A549 (cell line): ENCODE measurements at regions of chr12 and their contacts with region 1.

Region 1: GRCh38 chr12:6735448-6736191 is 11.8 kb downstream of the COPS7A start:
- DNase-seq: peak; percentile 68 to 77
- ATAC-seq: peak; percentile 99
- H3K4me3 ChIP-seq: no peak overlapping the region
- H3K27ac ChIP-seq: peak overlapping the region; percentile 67 to 72
- H3K4me1 ChIP-seq: peaks cover 6% of the 10 kb centered on the region
- CTCF ChIP-seq: peak; percentile 90
- EP300 ChIP-seq: no peak
- POLR2A ChIP-seq: no peak
- RAD21 ChIP-seq: peak; percentile 80 to 83

Region 2: DNA sequence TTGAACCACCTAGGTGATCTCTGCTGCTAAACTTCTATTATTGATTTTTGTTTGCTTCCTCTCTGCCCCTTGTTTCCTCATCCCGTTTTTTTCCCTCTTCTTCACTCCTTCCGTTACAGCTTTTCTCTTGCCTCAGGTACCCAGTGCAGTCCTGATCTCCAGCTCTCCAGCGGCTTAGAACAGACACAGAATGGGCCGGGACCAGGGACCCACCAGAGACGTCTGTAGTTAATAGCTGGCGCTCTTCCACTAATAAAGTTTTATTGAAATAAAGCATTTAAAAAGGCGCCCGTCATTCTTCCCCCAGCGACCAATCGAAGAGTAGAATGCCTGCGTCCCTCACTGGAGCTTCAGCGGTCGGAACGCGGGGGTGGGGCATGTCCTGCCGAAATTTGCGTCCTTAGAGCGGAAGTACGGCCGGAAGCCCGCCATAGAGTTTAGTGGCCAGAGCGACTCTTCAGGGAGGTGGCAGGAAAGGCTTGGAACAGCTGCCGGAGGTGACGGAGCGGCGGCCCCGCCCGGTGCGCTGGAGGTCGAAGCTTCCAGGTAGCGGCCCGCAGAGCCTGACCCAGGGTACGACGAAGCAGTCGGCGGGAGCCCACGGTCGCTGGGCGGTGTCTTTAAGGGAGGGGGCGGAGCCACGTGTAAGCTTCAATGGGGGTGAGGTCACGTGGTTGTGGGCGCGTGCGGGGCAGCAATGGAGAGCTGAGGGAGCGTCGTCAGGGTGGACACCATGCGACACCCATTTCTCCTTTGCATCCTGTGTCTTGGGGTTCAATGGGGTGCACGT is 11.8 kb before region 1 on chr12 and contains the start of gene COPS7A:
- CTCF ChIA-PET with region 1: interaction called, 12 read pairs
- POLR2A ChIA-PET with region 1: interaction called, 24 read pairs
- DNase-seq: peak; percentile 99
- ATAC-seq: peak; percentile 98
- H3K4me3 ChIP-seq: peak within 1 kb of the TSS; percentile 61
- H3K27ac ChIP-seq: peak within 1 kb of the TSS; percentile 86 to 89
- H3K4me1 ChIP-seq: peaks cover 13% of the 10 kb centered on the region
- CTCF ChIP-seq: no peak
- EP300 ChIP-seq: no peak
- POLR2A ChIP-seq: peak; percentile 92
- RAD21 ChIP-seq: no peak
- polyA plus RNA-seq, gene COPS7A: 78.8 and 95.0 TPM in 2 replicates

Region 3: DNA sequence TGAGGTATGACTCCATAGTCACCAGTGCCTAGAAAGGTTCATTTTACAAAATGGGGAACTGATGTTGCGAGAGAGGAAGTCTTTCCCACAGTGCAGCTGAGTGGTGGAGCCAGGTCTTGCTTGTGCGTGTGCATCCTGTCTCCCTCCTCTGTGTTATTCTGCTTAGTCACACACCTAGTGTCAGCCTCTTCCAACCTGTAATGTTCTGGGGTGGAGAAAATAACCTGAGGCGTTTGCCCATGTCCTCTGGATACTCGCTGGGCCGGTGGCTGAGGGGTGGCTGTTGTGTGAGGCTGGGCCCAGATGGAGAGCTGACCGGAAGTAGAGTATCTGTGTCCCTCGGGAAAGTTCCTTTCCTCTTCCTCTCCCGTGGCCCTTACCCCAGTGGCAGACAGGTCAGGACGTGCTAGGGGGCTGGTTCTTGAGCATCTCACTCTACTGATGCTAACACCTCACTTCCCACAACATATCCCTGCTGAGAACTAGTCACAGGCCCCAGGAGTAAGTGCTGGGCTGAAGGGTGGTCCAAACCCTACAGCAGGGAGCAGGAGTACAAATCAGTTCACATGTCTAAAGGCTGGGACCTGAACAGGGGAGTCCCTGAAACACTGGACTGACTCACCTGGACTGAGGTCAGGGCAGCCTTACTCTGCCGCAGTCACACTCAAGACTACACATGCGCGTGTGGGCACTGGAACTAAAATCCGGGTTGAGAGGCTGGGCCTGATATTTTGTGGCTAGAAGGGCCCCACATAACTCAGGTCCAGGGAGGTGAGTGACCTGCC is 10.3 kb after region 1 on chr12:
- CTCF ChIA-PET with region 1: interaction called, 17 read pairs
- POLR2A ChIA-PET with region 1: no interaction called
- DNase-seq: no peak
- ATAC-seq: peak; percentile 25 to 49; a peak in 3 of 6 replicates
- H3K4me3 ChIP-seq: no peak overlapping the region
- H3K27ac ChIP-seq: no peak overlapping the region
- H3K4me1 ChIP-seq: 0 out of 3 replicates have a peak, but pooled peaks cover 4% of the 10 kb centered on the region
- CTCF ChIP-seq: no peak
- EP300 ChIP-seq: no peak
- POLR2A ChIP-seq: no peak
- RAD21 ChIP-seq: no peak

Region 4: DNA sequence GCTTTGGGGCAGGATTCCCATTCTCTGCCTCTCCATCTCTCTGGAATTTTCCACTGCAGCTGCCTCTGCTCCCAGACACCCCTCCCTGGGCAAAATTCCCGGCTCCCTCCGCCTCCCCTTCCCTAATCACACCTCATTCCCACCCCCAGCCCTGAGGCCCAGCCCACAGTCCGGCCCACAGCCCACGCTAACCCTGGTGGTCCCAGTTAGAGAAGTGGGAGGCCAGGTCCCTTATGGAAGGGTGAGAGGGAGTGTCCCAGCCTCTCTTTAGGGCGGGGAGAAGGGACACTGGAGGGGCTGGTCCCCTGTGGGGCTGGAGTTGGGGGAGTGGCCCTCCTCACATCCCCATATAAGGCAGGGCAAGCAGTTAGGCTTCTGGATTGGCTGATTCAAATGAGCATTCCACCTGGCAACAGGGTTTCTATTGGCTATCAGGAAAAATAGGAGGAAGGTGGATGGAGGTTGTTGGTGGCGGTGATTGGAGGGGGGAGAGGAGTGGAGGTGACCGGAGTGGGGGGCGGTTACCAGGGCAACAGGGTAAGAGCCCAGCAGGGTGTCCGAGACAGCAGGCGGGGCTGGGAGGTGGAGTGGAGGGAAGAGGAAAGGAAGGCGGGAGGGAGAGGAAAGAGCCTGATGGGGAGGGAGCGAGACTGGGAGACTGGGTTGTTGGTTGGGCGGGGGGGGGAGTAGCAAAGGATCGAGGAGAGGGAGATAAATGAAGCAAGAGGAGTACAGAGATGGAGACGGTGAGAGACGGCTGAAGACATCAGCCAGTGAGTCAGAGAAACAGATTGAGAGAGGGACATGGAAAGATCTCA is 28.6 kb after region 1 on chr12:
- CTCF ChIA-PET with region 1: interaction called, 50 read pairs
- POLR2A ChIA-PET with region 1: interaction called, 3 read pairs
- DNase-seq: peak; percentile 100
- ATAC-seq: peak; percentile 69 to 87
- H3K4me3 ChIP-seq: peak overlapping the region; percentile 97
- H3K27ac ChIP-seq: peak overlapping the region; percentile 95 to 99
- H3K4me1 ChIP-seq: peaks cover 39% of the 10 kb centered on the region
- CTCF ChIP-seq: no peak
- EP300 ChIP-seq: no peak
- POLR2A ChIP-seq: peak; percentile 47
- RAD21 ChIP-seq: no peak

Region 5: GRCh38 chr12:6771091-6771495 is 35.5 kb after region 1 on chr12:
- CTCF ChIA-PET with region 1: interaction called, 50 read pairs
- POLR2A ChIA-PET with region 1: interaction called, 3 read pairs
- DNase-seq: no peak
- ATAC-seq: no peak
- H3K4me3 ChIP-seq: no peak overlapping the region
- H3K27ac ChIP-seq: peak overlapping the region in 1 of 2 experiments; percentile 6; a peak in 1 of 6 replicates
- H3K4me1 ChIP-seq: peaks cover 49% of the 10 kb centered on the region
- CTCF ChIP-seq: no peak
- EP300 ChIP-seq: no peak
- POLR2A ChIP-seq: no peak
- RAD21 ChIP-seq: no peak

Region 6: DNA sequence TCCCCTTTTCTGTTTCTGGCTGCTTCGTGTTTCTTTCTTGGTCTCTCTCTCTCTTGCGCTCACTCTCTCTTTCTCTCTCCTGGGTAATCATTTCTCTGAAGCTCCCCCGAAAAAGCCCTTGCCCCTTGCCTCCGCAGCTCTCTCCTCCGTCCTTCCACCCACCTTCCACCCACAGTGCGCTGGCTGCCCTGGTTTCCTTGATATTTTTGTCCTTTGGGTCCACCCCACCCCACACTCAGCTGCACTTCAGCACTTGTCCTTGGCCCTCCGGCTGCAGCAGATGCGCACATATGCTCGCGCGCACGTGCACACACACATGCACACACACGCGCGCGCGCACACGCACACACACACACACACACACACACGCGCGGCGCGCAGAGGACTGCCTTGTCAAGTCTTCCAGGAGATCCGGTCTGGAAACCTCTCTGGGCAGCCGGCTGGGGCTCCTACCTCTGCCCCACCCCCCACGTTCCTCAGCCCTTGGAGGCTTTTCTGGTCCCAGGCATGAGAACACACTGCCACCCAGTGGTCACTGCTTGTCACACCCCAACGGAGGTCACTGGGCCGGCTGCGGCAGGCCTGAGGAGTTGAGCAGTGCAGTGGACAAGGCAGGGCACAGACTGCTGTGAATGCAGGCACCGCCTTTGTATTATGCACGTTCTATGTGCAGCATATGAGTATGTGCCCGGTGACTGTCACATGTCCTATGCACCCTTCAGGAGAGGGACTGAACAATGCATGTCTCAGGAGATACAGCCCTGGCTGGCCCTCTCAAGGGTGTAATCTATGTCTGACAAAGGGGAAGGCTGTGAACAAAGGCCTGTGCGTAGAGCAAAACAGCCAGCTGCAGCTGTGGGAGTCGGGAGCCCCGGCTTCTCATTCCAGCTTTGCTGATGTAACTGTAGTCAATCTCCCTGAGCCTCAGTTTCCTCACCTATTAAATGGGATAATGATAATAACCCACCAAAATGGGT is 43.2 kb after region 1 on chr12:
- CTCF ChIA-PET with region 1: interaction called, 46 read pairs
- POLR2A ChIA-PET with region 1: no interaction called
- DNase-seq: peak; percentile 71 to 91
- ATAC-seq: peak; percentile 94 to 97
- H3K4me3 ChIP-seq: peak overlapping the region; percentile 30; the same call in 2 of the 3 replicates
- H3K27ac ChIP-seq: peak overlapping the region; percentile 34 to 80; a peak in 4 of 6 replicates
- H3K4me1 ChIP-seq: peaks cover 15% of the 10 kb centered on the region; the same call in 2 of the 3 replicates
- CTCF ChIP-seq: peak; percentile 94
- EP300 ChIP-seq: no peak
- POLR2A ChIP-seq: no peak
- RAD21 ChIP-seq: peak; percentile 98 to 99